Heart right ventricle (tissue), 16 donors: ENCODE measurements at regions of chr11 and their contacts with region 1.

Region 1: DNA sequence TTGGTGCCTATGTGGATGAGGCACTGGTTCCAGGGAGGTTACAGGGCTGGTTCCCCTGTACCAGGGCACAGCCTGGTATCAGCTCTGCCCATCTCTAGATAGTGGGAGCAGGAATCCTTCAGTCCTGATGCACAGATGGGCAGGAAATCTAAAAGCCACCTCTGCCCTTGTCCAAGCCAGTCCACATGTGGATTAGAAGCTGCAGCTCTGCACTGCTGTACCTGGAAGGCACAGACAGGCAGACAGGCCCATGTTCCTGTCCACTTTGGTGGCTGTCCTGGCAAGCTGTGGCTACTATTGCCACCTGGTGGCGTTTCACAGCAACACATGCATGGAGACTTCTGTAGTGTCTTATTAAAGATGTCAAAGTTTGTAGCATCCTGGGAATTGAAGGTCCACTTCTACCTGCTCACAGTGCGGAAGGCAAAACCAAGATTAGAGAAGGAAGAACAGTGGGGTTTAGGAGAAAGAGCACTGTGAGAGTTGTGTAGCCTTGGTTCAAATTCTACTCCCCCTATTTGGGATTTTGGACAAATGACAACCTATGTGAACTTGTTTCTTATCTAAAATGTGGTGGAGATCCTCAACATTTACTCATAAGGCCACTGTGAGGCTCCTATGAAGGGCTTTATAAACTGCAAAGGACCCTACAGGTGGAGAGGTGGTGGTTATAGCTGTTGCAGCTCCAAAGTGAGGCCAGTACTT is 30.1 kb downstream of the NAV2 start:
- DNase-seq: peak; percentile 72 to 80
- ATAC-seq: peak; percentile 78 to 90 (median 86)
- H3K4me3 ChIP-seq: no peak overlapping the region
- H3K27ac ChIP-seq: peak overlapping the region in 1 of 10 donors; percentile 13
- H3K4me1 ChIP-seq: peaks cover 0 to 51% (median 27%) of the 10 kb centered on the region in 9 donors
- H3K27me3 ChIP-seq: no peaks in the 10 kb centered on the region
- CTCF ChIP-seq: peak; percentile 80 to 94 (median 91)

Region 2: GRCh38 chr11:19071255-19071654 is 671.5 kb before region 1 on chr11:
- intact Hi-C with region 1: loop called in 1 of 10 experiments (anchors 10 kb)
- DNase-seq: peak; percentile 57 to 59
- ATAC-seq: peak; percentile 76 to 95 (median 88)
- H3K4me3 ChIP-seq: peak overlapping the region in 3 of 10 donors; percentile 13 to 29 (median 22)
- H3K27ac ChIP-seq: no peak overlapping the region
- H3K4me1 ChIP-seq: peaks cover 0 to 3% (median 0%) of the 10 kb centered on the region in 9 donors
- H3K27me3 ChIP-seq: peaks cover 0 to 17% (median 0%) of the 10 kb centered on the region in 7 donors
- CTCF ChIP-seq: peak; percentile 74 to 96 (median 90)

Region 3: GRCh38 chr11:19326499-19326898 is 416.2 kb before region 1 on chr11:
- intact Hi-C with region 1: loop called in 1 of 10 experiments (anchors 10 kb)
- DNase-seq: no peak
- ATAC-seq: peak in 1 of 8 donors; percentile 19
- H3K4me3 ChIP-seq: no peak overlapping the region
- H3K27ac ChIP-seq: no peak overlapping the region
- H3K4me1 ChIP-seq: no peaks in the 10 kb centered on the region
- H3K27me3 ChIP-seq: peaks cover 0 to 6% (median 3%) of the 10 kb centered on the region in 7 donors
- CTCF ChIP-seq: peak in 7 of 9 donors; percentile 21 to 41 (median 32)

Region 4: DNA sequence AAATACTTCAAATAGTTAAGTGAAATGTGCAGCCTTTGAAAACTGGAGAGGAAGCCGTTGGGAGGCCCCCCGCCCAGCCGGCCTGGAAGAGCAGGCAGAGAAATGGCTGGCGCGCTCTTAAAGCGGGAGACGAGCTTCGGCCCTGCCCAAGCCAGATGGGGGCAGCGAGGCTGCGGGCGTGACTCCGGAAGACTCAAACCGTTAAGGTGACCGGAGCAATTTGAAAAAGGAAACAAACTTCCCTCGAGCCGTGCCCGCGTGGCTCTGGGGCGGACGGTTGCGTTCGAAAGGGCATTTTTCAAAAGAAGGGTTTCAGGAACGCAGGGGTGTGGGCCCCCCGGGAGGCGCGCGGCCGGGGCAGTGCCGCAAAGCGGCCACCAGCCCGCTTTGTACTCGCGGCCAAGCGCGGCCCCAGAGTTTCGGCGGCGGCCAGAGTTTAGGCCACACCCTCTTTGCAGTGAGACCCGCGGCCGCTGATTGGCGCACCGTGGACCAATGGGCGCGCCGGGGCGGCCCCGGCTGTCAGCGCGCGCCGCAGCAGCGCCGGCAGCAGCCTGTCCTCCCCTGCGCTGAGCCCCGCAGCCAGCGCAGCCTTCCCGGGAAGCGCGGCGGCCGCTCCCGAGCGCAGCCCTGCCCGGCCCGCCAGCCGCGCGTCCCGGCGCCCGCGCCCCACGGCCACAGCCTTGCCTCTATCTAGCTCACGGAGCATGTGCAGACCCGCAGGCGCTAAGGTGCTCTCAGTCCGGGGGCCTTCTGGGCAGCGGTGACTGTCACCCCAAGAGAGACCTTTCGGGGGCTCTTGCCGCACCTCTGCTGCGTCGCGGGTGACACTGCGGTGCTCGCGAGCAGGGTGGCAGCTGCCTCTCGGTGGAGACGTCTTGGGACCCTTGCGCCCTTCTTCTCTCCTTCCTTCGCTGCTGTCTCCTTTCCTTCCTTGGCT is 30.2 kb before region 1 on chr11 and contains the start of gene NAV2:
- intact Hi-C with region 1: loop called in 2 of 10 experiments (anchors 2 kb)
- DNase-seq: peak; percentile 92 to 93
- ATAC-seq: peak; percentile 88 to 97 (median 94)
- H3K4me3 ChIP-seq: peak within 1 kb of the TSS; percentile 50 to 83 (median 74)
- H3K27ac ChIP-seq: peak within 1 kb of the TSS; percentile 85 to 98 (median 96)
- H3K4me1 ChIP-seq: peaks cover 7 to 60% (median 47%) of the 10 kb centered on the region in 9 donors
- H3K27me3 ChIP-seq: peaks cover 0 to 33% (median 0%) of the 10 kb centered on the region in 7 donors
- CTCF ChIP-seq: peak in 4 of 9 donors; percentile 4 to 21 (median 13)
- total RNA-seq, gene NAV2: 11.3 to 34.7 (median 23.7) TPM

Region 5: DNA sequence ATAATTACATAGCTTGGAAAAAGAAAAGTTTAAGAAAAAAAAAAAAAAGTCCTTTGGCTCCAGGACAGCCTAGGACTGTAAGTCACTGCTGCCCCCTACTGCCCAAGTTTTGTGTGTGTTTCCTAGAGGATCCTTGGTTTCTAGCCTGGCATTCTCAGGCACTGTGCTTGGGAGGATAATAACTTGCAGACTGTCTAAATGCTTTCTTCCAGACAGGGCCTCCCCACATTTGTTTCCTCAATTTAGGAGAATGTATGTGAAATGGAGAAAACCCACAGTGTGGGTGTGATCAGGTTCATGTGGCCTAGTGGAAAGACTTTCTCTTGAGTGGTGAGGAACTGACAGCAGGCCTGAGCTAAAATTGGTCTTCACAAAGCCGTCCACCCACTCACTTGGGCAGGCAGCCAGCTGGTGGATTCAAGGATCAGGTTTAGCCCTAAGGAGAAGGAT is 160.9 kb after region 1 on chr11:
- intact Hi-C with region 1: loop called in 7 of 10 experiments (anchors 5 to 10 kb)
- DNase-seq: peak; percentile 37 to 72
- ATAC-seq: peak; percentile 50 to 80 (median 67)
- H3K4me3 ChIP-seq: no peak overlapping the region
- H3K27ac ChIP-seq: no peak overlapping the region
- H3K4me1 ChIP-seq: peaks cover 0 to 20% (median 4%) of the 10 kb centered on the region in 9 donors
- H3K27me3 ChIP-seq: no peaks in the 10 kb centered on the region
- CTCF ChIP-seq: peak; percentile 62 to 87 (median 82)

Region 6: GRCh38 chr11:20429216-20429615 is 686.5 kb after region 1 on chr11:
- intact Hi-C with region 1: no loop called
- DNase-seq: no peak
- ATAC-seq: no peak
- H3K4me3 ChIP-seq: no peak overlapping the region
- H3K27ac ChIP-seq: no peak overlapping the region
- H3K4me1 ChIP-seq: no peaks in the 10 kb centered on the region
- H3K27me3 ChIP-seq: no peaks in the 10 kb centered on the region
- CTCF ChIP-seq: no peak